ENCODE measurements at regions of chr3 and their contacts with region 1.

Region 1: GRCh38 chr3:186361762-186362536 is at the start of gene DGKG:
- DNase-seq: peak; percentile 49
- H3K4me3 ChIP-seq: peak within 1 kb of the TSS; percentile 28 to 50 (median 39)
- H3K27ac ChIP-seq: peak within 1 kb of the TSS; percentile 17 to 57 (median 38)
- H3K4me1 ChIP-seq: peaks cover 0 to 26% (median 7%) of the 10 kb centered on the region in 4 donors
- H3K27me3 ChIP-seq: peaks cover 40% of the 10 kb centered on the region
- CTCF ChIP-seq: no peak
- EP300 ChIP-seq: no peak
- POLR2A ChIP-seq: peak; percentile 17
- total RNA-seq, gene DGKG: 1.00 to 2.9 (median 1.8) TPM

Region 2: DNA sequence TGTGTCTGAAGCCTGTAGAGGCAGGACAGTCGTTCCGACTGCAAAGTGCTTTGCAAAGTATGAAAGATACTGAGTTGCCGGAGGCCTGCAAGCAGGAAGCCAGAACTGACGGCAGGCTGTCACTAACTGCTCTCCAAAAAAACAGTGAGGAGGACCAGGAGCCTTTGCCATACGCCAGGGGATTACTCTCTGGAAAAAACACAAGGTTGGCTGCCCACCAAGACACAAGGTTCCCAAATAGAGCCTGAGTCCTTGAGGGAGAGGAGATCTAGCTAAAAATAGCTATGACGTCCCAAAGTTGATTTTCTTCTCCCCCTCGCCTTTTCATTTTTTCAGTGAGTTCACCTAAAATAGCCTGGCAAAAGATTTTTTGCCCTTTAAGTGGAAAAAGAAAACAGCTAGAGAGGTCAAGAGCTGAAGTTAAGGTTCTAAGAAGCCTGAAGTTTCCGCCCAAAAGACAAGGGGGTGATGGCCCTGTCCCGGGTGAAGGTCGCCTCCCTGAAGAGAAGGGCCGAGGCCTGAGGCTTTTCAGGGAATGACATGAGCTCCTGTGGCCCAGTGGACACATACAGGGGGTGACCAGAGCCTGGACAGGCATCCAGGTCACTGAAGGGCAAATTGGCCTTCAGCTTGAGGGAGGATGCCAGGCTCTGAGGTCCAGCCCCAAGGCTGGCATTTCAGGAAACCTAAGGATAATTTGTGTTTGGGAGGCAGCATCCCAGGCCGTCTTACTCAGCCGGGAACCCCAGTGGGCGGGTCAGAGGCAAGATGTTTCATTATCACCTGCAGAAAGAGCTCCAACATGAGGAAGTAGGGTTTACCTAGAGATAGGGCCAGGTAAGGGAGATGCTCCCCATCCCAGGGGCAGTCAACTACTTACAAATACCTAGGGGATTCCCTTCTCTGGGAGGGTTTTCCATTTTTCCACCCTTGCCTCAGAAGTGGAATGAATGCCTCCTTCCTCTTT is 45.0 kb after region 1 on chr3:
- in situ Hi-C with region 1: no loop called
- intact Hi-C with region 1: loop called (anchors 5 kb)
- DNase-seq: peak; percentile 59
- H3K4me3 ChIP-seq: no peak overlapping the region
- H3K27ac ChIP-seq: peak overlapping the region; percentile 72 to 84 (median 80)
- H3K4me1 ChIP-seq: peaks cover 0 to 15% (median 3%) of the 10 kb centered on the region in 4 donors
- H3K27me3 ChIP-seq: no peaks in the 10 kb centered on the region
- CTCF ChIP-seq: no peak
- EP300 ChIP-seq: no peak
- POLR2A ChIP-seq: no peak

Measured in transverse colon (tissue), 4 donors.